Right cardiac atrium (tissue), 5 donors: ENCODE measurements at regions of chr5 and their contacts with region 1.

Region 1: DNA sequence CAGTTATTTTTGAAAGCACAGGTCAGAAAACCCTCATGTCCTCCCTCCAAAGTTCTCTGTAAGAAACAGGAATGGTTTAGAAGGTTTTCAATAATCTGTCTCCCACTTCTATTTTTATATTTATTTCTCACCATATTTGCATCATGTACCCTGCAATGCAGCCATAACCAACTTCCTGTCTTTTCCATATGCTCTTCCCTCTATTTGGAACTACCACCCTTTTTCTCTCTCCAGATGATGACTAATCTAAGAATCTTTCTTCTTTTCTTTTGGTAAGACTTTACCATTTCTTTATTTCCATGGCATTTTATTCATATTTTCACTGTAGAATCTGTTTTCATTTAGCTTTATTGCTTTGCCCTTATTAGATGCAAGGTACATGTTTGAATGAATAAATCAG is 33.9 kb downstream of the MAN2A1 start:
- DNase-seq: no peak
- ATAC-seq: no peak
- H3K4me3 ChIP-seq: no peak overlapping the region
- H3K27ac ChIP-seq: no peak overlapping the region
- H3K4me1 ChIP-seq: no peaks in the 10 kb centered on the region
- H3K27me3 ChIP-seq: no peaks in the 10 kb centered on the region

Region 2: DNA sequence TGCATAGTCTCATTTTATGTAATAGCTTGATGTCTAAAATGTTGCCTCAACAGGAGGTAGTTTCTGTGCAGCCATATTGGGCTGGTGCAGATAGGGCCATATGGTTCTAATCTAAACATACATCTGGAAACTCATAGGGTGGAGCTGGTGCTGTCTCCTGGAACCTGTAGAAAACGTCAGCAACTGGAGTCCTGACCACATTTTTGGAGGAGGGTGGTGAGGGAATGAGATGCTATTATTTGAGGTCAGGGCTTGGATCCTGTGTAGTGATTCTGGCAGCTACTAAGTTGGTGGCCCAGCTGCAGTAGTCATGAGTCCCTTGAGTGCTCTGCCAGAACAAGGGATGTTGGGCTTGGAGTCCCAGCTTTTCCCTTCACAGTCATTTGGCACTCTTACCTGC is 19.8 kb before region 1 on chr5:
- intact Hi-C with region 1: loop called in 1 of 4 experiments (anchors 2 kb)
- DNase-seq: no peak
- ATAC-seq: no peak
- H3K4me3 ChIP-seq: no peak overlapping the region
- H3K27ac ChIP-seq: no peak overlapping the region
- H3K4me1 ChIP-seq: peaks cover 15% of the 10 kb centered on the region
- H3K27me3 ChIP-seq: no peaks in the 10 kb centered on the region

Region 3: DNA sequence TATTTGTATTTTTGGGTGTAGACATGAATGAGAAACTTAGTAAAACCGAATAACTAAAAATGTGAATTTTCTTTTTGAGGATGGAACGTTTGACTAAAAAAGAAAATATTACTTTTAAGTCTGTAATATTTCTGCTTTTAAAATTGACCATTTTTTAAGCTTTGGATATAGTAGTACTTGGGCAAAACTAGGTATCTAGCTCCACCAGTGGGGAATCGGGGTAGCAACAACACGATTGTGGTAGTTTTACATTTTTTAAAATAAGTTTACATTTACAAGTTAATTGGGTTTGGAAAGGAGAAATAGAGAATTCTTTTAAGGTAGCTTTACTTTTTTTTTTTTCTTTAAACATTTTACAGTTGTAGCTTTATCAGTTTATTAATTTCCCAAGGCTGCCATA is 120.5 kb after region 1 on chr5:
- intact Hi-C with region 1: no loop called
- DNase-seq: no peak
- ATAC-seq: no peak
- H3K4me3 ChIP-seq: no peak overlapping the region
- H3K27ac ChIP-seq: no peak overlapping the region
- H3K4me1 ChIP-seq: no peaks in the 10 kb centered on the region
- H3K27me3 ChIP-seq: no peaks in the 10 kb centered on the region